ENCODE measurements at regions of chr17 and their contacts with region 1.

Region 1: DNA sequence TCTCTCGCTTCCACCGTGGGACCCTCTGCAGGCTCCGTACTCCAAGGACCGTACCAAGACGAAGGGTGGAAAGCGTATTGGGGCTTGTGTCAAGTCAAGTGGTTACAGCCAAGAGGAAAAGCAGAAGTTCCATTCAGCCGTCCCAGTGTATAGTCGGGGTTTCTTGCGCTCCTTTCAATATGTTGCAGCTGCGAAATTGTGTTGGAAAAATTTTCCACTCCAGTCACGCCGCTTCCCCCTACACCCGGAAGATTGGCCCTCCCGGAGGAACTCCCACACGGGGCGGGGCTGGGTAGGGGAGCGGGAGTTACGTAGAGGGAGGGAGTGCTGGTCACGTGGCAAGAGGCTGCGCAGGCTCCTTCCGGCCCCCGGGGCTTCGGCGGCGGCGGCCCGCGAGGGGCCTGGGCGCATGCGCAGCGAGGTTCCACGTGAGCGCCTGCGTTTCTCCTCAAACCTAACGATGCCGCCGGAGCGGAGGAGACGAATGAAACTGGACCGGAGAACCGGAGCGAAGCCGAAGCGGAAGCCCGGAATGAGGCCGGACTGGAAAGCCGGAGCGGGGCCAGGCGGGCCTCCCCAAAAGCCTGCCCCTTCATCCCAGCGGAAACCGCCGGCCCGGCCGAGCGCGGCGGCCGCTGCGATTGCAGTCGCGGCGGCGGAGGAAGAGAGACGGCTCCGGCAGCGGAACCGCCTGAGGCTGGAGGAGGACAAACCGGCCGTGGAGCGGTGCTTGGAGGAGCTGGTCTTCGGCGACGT is at the start of gene UTP18:
- DNase-seq: peak; percentile 96
- H3K4me3 ChIP-seq: peak within 1 kb of the TSS; percentile 71 to 91 (median 78)
- H3K27ac ChIP-seq: peak within 1 kb of the TSS; percentile 91
- H3K4me1 ChIP-seq: peaks cover 37% of the 10 kb centered on the region
- H3K27me3 ChIP-seq: no peaks in the 10 kb centered on the region
- CTCF ChIP-seq: no peak
- total RNA-seq, gene UTP18: 25.0 to 37.3 TPM

Region 2: GRCh38 chr17:51103451-51103850 is 156.9 kb before region 1 on chr17:
- CTCF ChIA-PET with region 1: no interaction called
- dilution Hi-C with region 1: no loop called
- in situ Hi-C with region 1: no loop called
- intact Hi-C with region 1: no loop called
- DNase-seq: no peak
- H3K4me3 ChIP-seq: no peak overlapping the region
- H3K27ac ChIP-seq: no peak overlapping the region
- H3K4me1 ChIP-seq: no peaks in the 10 kb centered on the region
- H3K27me3 ChIP-seq: no peaks in the 10 kb centered on the region
- CTCF ChIP-seq: no peak

Region 3: DNA sequence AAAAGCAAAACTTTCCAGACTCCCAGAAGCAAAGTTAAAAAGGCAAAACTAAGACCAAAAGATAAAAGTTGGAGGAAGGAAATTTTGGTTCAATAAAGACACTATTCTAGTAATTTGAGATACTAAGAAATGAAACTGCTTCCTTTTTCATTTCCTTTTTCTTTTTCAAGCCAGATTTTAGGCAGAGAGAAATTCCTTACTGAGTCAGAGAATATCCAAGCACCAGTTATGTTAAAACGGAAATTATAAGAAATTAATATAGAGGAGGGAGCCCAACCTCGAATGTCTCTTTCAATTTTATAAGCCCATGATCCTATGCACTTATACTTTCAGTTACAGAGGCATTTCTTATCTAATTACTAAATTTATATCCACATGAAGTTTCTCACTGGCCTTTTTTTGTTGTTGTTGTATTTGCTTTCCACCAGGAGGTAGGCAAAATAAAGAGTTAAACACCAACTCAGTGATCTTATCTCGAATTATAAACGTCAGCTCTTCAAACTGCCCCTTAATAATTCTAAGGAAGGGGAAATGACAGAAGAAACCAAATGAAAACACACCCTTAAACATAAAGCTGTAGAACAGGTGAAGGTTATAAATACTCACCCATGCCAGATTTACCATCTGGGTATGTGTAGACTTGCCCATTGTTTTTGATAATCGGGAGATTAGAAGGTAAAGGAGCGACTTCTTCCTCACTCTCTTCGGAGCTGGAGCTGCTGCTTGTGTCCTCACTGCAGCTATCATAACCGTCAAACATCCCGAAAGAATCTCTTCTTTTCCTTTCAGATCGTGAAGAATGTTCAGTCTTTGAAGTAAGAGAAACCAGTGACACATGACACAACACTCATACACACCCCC is 35.7 kb before region 1 on chr17:
- CTCF ChIA-PET with region 1: no interaction called
- dilution Hi-C with region 1: no loop called
- in situ Hi-C with region 1: no loop called
- intact Hi-C with region 1: loop called (anchors 5 kb)
- DNase-seq: no peak
- H3K4me3 ChIP-seq: no peak overlapping the region
- H3K27ac ChIP-seq: no peak overlapping the region
- H3K4me1 ChIP-seq: no peaks in the 10 kb centered on the region
- H3K27me3 ChIP-seq: no peaks in the 10 kb centered on the region
- CTCF ChIP-seq: no peak

Region 4: GRCh38 chr17:51472670-51473205 is 212.4 kb after region 1 on chr17:
- CTCF ChIA-PET with region 1: no interaction called
- dilution Hi-C with region 1: no loop called
- in situ Hi-C with region 1: no loop called
- intact Hi-C with region 1: no loop called
- DNase-seq: no peak
- H3K4me3 ChIP-seq: no peak overlapping the region
- H3K27ac ChIP-seq: no peak overlapping the region
- H3K4me1 ChIP-seq: no peaks in the 10 kb centered on the region
- H3K27me3 ChIP-seq: peaks cover 8% of the 10 kb centered on the region
- CTCF ChIP-seq: no peak

Measured in mammary epithelial cell (primary cell).